ENCODE measurements at regions of chr12 and their contacts with region 1.

Region 1: GRCh38 chr12:63917864-63918799 is 73.6 kb downstream of the SRGAP1 start:
- DNase-seq: peak; percentile 63
- H3K4me3 Mint-ChIP-seq: peak overlapping the region; percentile 33
- H3K27ac Mint-ChIP-seq: peak overlapping the region; percentile 89
- H3K4me1 Mint-ChIP-seq: peaks cover 87% of the 10 kb centered on the region
- H3K27me3 Mint-ChIP-seq: no peaks in the 10 kb centered on the region
- CTCF ChIP-seq: no peak

Region 2: GRCh38 chr12:63862214-63863107 is 55.7 kb before region 1 on chr12:
- CTCF ChIA-PET with region 1: interaction called, 6 read pairs
- intact Hi-C with region 1: loop called (anchors 5 kb)
- DNase-seq: peak; percentile 79
- H3K4me3 Mint-ChIP-seq: peak overlapping the region; percentile 58
- H3K27ac Mint-ChIP-seq: peak overlapping the region; percentile 78
- H3K4me1 Mint-ChIP-seq: peaks cover 36% of the 10 kb centered on the region
- H3K27me3 Mint-ChIP-seq: no peaks in the 10 kb centered on the region
- CTCF ChIP-seq: no peak

Region 3: GRCh38 chr12:63882844-63883243 is 35.3 kb before region 1 on chr12:
- CTCF ChIA-PET with region 1: no interaction called
- intact Hi-C with region 1: no loop called
- DNase-seq: no peak
- H3K4me3 Mint-ChIP-seq: no peak overlapping the region
- H3K27ac Mint-ChIP-seq: no peak overlapping the region
- H3K4me1 Mint-ChIP-seq: peaks cover 9% of the 10 kb centered on the region
- H3K27me3 Mint-ChIP-seq: no peaks in the 10 kb centered on the region
- CTCF ChIP-seq: no peak

Region 4: GRCh38 chr12:63897931-63898330 is 20.2 kb before region 1 on chr12:
- CTCF ChIA-PET with region 1: interaction called, 8 read pairs
- intact Hi-C with region 1: loop called (anchors 2 kb)
- DNase-seq: no peak
- H3K4me3 Mint-ChIP-seq: no peak overlapping the region
- H3K27ac Mint-ChIP-seq: peak overlapping the region; percentile 28
- H3K4me1 Mint-ChIP-seq: peaks cover 55% of the 10 kb centered on the region
- H3K27me3 Mint-ChIP-seq: no peaks in the 10 kb centered on the region
- CTCF ChIP-seq: no peak

Region 5: GRCh38 chr12:64088431-64089349 is 170.6 kb after region 1 on chr12:
- CTCF ChIA-PET with region 1: no interaction called
- intact Hi-C with region 1: loop called (anchors 5 kb)
- DNase-seq: peak; percentile 78
- H3K4me3 Mint-ChIP-seq: peak overlapping the region; percentile 57
- H3K27ac Mint-ChIP-seq: peak overlapping the region; percentile 95
- H3K4me1 Mint-ChIP-seq: peaks cover 46% of the 10 kb centered on the region
- H3K27me3 Mint-ChIP-seq: no peaks in the 10 kb centered on the region
- CTCF ChIP-seq: no peak

Region 6: DNA sequence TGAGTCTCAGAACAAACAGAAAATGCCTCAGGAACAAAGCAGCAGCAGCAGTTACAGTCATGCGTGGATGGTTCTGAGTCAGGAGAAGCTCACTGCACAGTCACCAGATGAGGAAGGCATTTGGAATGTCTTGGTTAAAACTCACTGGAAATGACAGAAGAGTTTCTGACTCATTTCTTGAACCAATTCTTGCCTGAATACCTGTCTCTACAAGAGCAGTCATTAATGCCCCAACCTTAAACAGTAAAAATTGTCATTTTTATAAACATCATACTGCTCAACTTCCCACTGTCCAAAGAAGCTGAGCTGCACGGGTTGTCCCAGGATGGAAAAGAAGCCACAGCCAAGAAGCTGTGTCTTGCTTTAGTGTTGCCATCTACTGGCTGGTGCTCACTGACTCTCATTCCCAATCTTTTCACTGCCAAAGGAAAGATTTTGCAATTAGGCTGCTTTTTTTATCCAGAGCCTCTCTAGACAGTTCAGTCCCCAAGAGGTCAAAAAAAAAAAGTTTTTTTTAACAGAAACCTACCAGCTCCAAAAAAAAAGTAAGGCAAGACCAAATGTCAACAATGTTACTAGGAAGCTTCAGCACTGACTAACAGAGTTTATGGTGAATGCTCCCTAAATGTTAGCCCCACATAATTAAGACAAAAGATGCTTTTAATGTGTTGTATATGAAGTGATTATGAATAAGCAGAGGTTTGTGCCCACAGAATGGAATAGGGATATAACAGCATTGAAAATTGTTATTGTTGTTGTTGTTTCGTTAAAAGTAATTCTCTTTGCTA is 263.6 kb after region 1 on chr12:
- CTCF ChIA-PET with region 1: no interaction called
- intact Hi-C with region 1: loop called (anchors 10 kb)
- DNase-seq: peak; percentile 43
- H3K4me3 Mint-ChIP-seq: no peak overlapping the region
- H3K27ac Mint-ChIP-seq: no peak overlapping the region
- H3K4me1 Mint-ChIP-seq: peaks cover 37% of the 10 kb centered on the region
- H3K27me3 Mint-ChIP-seq: no peaks in the 10 kb centered on the region
- CTCF ChIP-seq: peak; percentile 21

Region 7: GRCh38 chr12:64222009-64222765 is 304.1 kb after region 1 on chr12 and contains the start of gene KICS2:
- CTCF ChIA-PET with region 1: no interaction called
- intact Hi-C with region 1: loop called (anchors 5 kb)
- DNase-seq: peak; percentile 95
- H3K4me3 Mint-ChIP-seq: peak within 1 kb of the TSS; percentile 99
- H3K27ac Mint-ChIP-seq: peak within 1 kb of the TSS; percentile 96
- H3K4me1 Mint-ChIP-seq: peaks cover 6% of the 10 kb centered on the region
- H3K27me3 Mint-ChIP-seq: no peaks in the 10 kb centered on the region
- CTCF ChIP-seq: no peak
- total RNA-seq, gene KICS2: 12.6 and 18.3 TPM in 2 replicates

Region 8: DNA sequence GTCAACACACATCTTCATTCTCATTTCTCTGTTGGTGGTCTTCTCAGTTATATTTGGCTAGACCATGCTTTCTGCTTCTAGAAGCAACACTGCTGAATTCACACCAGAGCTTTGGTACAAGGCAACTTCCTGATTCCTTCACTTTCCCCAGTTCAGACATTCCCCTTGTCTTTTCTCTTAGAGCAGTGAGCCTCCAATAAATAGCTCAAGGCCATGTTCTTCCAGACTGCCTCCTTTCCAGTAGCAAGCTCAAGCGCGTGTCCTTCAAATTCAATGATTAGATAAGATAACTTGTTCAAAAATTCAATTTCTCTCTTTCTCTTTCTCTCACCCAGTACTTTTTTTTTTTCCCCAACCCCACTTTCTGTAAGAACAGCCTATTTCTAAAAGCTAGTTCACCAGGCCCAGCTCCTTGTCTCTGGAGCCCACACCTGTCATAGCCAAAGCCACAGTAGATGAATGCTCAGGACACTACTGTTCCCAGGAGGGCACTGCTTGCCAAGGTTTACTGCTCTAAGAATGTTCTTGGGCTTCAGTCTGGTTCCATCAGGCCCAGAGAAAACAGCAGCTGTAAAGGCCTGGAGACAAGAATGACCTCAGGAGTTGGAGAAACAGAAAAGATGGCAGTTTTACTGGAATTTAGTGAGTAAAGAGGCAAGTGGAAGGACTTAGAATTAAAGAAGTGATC is 551.5 kb after region 1 on chr12:
- CTCF ChIA-PET with region 1: no interaction called
- intact Hi-C with region 1: no loop called
- DNase-seq: no peak
- H3K4me3 Mint-ChIP-seq: no peak overlapping the region
- H3K27ac Mint-ChIP-seq: no peak overlapping the region
- H3K4me1 Mint-ChIP-seq: no peaks in the 10 kb centered on the region
- H3K27me3 Mint-ChIP-seq: no peaks in the 10 kb centered on the region
- CTCF ChIP-seq: no peak

Region 9: GRCh38 chr12:64650762-64651161 is 732.6 kb after region 1 on chr12:
- CTCF ChIA-PET with region 1: no interaction called
- intact Hi-C with region 1: no loop called
- DNase-seq: no peak
- H3K4me3 Mint-ChIP-seq: no peak overlapping the region
- H3K27ac Mint-ChIP-seq: peak overlapping the region; percentile 39
- H3K4me1 Mint-ChIP-seq: peaks cover 51% of the 10 kb centered on the region
- H3K27me3 Mint-ChIP-seq: no peaks in the 10 kb centered on the region
- CTCF ChIP-seq: no peak